T-cell (primary cell): ENCODE measurements at regions of chr10 and their contacts with region 1.

Region 1: GRCh38 chr10:80498833-80499741 is 38.6 kb upstream of the SH2D4B start:
- DNase-seq: peak in 10 of 35 experiments; percentile 27 to 59 (median 37)
- ATAC-seq: peak; percentile 35 to 71 (median 60)
- H3K4me3 ChIP-seq: peak overlapping the region; percentile 1 to 39
- H3K4me3 Mint-ChIP-seq: peak overlapping the region; percentile 62 to 80 (median 68)
- H3K27ac ChIP-seq: peak overlapping the region; percentile 70
- H3K27ac Mint-ChIP-seq: peak overlapping the region; percentile 95 to 99
- H3K4me1 ChIP-seq: peaks cover 89 to 92% of the 10 kb centered on the region in 2 experiments
- H3K4me1 Mint-ChIP-seq: peaks cover 98 to 100% (median 99%) of the 10 kb centered on the region in 3 donors
- H3K27me3 ChIP-seq: no peaks in the 10 kb centered on the region
- H3K27me3 Mint-ChIP-seq: no peaks in the 10 kb centered on the region

Region 2: DNA sequence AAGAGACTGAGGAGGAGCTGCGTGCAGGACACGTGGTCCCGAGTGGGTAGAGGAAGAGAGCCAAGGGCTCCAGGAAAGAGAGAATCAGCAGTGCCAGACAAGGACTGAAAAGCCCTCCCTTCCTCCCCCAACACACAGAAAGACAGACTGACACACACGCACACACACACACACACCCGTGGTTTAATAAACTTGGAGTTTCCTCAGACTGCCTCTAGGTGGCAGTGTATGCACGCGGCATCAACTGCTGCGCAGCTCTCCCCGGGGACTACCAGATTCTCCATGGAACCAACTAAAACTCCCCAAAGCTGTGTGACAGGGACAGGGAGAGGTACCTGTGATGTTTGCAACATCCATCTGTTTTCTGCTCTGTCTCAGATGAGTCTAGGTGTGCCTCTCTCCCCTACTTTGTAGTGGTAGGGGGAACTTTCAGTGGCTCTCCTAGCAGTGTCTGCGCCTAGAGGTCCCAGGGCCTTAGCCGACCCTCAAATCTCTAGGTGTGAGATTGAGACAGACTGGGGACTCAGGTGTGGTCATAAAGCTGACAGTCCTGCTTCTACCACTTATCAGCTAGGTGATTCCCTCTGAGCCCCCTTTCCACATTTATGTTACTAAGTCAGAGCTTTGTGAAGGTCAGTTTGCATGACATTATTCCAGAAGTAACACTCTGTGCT is 54.3 kb before region 1 on chr10:
- CTCF ChIA-PET with region 1: interaction called, 72 to 109 read pairs
- POLR2A ChIA-PET with region 1: interaction called in 1 of 2 experiments, 3 read pairs
- DNase-seq: peak in 17 of 35 experiments; percentile 32 to 85 (median 60)
- ATAC-seq: peak; percentile 78 to 86 (median 82)
- H3K4me3 ChIP-seq: no peak overlapping the region
- H3K4me3 Mint-ChIP-seq: peak overlapping the region in 1 of 3 donors; percentile 66
- H3K27ac ChIP-seq: no peak overlapping the region
- H3K27ac Mint-ChIP-seq: peak overlapping the region; percentile 85 to 89
- H3K4me1 ChIP-seq: peaks cover 12 to 22% of the 10 kb centered on the region in 2 experiments
- H3K4me1 Mint-ChIP-seq: peaks cover 47 to 63% (median 51%) of the 10 kb centered on the region in 3 donors
- H3K27me3 ChIP-seq: no peaks in the 10 kb centered on the region
- H3K27me3 Mint-ChIP-seq: no peaks in the 10 kb centered on the region

Region 3: DNA sequence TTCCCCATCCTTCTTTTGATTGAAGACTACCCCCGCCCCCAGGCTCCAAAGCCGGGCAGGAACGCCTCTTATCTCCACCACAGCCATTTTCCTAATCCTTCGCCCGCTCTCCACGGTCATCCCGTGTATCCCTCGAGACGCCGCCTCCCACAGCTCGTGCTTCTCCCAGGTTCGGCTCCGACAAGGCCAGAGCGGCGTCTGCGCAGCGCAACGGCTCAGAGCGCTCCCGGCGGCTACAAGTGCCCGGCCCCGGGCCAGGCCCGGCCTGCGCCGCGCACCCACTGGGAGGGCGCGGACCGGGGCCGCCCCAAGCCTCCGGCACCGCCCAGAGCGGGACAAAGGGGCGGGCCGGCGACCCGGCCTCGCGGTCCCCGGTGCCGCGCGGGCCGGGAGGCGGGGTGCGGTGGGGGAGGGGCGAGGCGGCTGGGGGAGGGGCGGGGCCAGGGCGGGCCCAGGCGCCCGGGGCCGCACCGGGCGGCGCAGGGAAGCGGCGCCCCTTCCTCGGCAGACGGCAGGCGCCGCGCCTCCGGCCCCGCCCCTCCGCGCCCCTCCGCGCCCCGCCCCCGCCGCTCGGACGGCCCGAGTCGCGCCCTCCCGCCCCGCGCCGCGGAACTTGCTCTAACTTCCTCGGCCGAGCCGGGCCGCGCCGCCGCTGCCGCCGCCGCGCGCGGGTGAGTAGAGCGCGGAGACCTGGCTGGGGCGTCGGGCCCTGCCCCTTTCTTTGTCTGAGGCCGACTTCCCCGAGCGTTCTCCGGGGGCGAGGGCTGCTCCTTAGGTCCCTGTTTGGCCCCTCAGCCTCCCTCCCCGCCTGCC is 45.2 kb before region 1 on chr10 and contains the start of gene TSPAN14:
- CTCF ChIA-PET with region 1: interaction called, 6 to 56 read pairs
- POLR2A ChIA-PET with region 1: interaction called, 4 to 12 read pairs
- DNase-seq: peak; percentile 26 to 87 (median 58)
- ATAC-seq: peak; percentile 71 to 79 (median 74)
- H3K4me3 ChIP-seq: peak within 1 kb of the TSS; percentile 76 to 82
- H3K4me3 Mint-ChIP-seq: peak within 1 kb of the TSS in 2 of 3 donors; percentile 98 to 99
- H3K27ac ChIP-seq: peak within 1 kb of the TSS; percentile 82
- H3K27ac Mint-ChIP-seq: peak within 1 kb of the TSS; percentile 95 to 99
- H3K4me1 ChIP-seq: peaks cover 10 to 44% of the 10 kb centered on the region in 2 experiments
- H3K4me1 Mint-ChIP-seq: peaks cover 43 to 45% (median 44%) of the 10 kb centered on the region in 3 donors
- H3K27me3 ChIP-seq: no peaks in the 10 kb centered on the region
- H3K27me3 Mint-ChIP-seq: no peaks in the 10 kb centered on the region
- total RNA-seq, gene TSPAN14: 130 to 204 (median 194) TPM